Naive thymus-derived CD4-positive, alpha-beta T cell (primary cell): ENCODE measurements at regions of chr20 and their contacts with region 1.

Region 1: DNA sequence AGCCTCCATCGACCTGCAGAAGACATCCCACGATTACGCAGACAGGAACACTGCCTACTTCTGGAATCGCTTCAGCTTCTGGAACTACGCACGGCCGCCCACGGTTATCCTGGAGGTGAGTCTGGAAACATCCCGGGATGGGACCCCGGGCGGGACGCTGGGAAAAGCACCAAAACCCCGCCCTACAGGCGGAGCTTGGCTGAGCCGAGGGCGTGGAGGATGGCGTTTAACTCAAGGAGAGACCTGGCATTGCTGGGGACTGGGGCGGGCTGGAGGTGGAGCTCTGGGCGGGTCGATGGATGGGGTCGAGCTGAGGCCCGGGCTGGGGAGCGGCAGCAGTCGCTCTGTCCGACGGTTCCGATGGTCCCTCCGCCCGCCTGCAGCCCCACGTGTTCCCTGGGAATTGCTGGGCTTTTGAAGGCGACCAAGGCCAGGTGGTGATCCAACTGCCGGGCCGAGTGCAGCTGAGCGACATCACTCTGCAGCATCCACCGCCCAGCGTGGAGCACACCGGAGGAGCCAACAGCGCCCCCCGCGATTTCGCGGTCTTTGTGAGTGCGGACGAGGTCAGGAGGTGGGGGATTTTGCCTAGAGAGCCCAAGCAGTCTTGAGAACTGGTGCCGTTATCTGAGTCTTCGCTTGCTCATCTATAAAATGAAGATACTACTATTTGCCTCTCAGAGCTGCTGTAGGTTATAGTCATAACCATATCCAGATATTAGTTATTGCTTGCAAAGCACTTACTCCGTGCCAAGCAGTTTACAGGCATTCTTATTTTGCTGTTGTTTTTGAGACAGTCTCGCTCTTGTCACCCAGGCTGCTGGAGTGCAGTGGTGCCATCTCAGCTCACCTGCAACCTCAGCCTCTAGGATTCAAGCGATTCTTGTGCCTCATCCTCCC is 3.8 kb downstream of the SPAG4 start:
- DNase-seq: peak; percentile 54 to 84 (median 68)
- ATAC-seq: peak; percentile 31
- H3K4me3 ChIP-seq: peak overlapping the region; percentile 70
- H3K4me3 Mint-ChIP-seq: peak overlapping the region; percentile 87 to 98 (median 91)
- H3K27ac ChIP-seq: peak overlapping the region; percentile 27
- H3K27ac Mint-ChIP-seq: peak overlapping the region; percentile 62 to 90 (median 85)
- H3K4me1 ChIP-seq: peaks cover 16 to 28% of the 10 kb centered on the region in 2 donors
- H3K4me1 Mint-ChIP-seq: peaks cover 13 to 45% (median 34%) of the 10 kb centered on the region in 7 donors
- H3K27me3 ChIP-seq: no peaks in the 10 kb centered on the region
- H3K27me3 Mint-ChIP-seq: peaks cover 0 to 3% (median 0%) of the 10 kb centered on the region in 5 donors

Region 2: GRCh38 chr20:34676642-34677373 is 942.6 kb before region 1 on chr20 and contains the start of gene PIGU:
- CTCF ChIA-PET with region 1: no interaction called
- POLR2A ChIA-PET with region 1: no interaction called
- intact Hi-C with region 1: loop called in 1 of 2 experiments (anchors 2 kb)
- DNase-seq: peak; percentile 88 to 97 (median 96)
- ATAC-seq: peak; percentile 99
- H3K4me3 ChIP-seq: peak within 1 kb of the TSS; percentile 63
- H3K4me3 Mint-ChIP-seq: peak within 1 kb of the TSS; percentile 95 to 99 (median 96)
- H3K27ac ChIP-seq: peak within 1 kb of the TSS; percentile 95
- H3K27ac Mint-ChIP-seq: peak within 1 kb of the TSS; percentile 85 to 98 (median 97)
- H3K4me1 ChIP-seq: peaks cover 4 to 5% of the 10 kb centered on the region in 2 donors
- H3K4me1 Mint-ChIP-seq: peaks cover 14 to 37% (median 24%) of the 10 kb centered on the region in 7 donors
- H3K27me3 ChIP-seq: no peaks in the 10 kb centered on the region
- H3K27me3 Mint-ChIP-seq: no peaks in the 10 kb centered on the region
- total RNA-seq, gene PIGU: 8.6 to 21.3 (median 16.1) TPM

Region 3: GRCh38 chr20:35410613-35411012 is 208.8 kb before region 1 on chr20:
- CTCF ChIA-PET with region 1: no interaction called
- POLR2A ChIA-PET with region 1: no interaction called
- intact Hi-C with region 1: loop called (anchors 1 to 2 kb)
- DNase-seq: no peak
- ATAC-seq: no peak
- H3K4me3 ChIP-seq: peak overlapping the region; percentile 79
- H3K4me3 Mint-ChIP-seq: peak overlapping the region; percentile 92 to 100 (median 98)
- H3K27ac ChIP-seq: no peak overlapping the region
- H3K27ac Mint-ChIP-seq: peak overlapping the region in 8 of 9 donors; percentile 48 to 100 (median 97)
- H3K4me1 ChIP-seq: peaks cover 8 to 9% of the 10 kb centered on the region in 2 donors
- H3K4me1 Mint-ChIP-seq: peaks cover 17 to 24% (median 22%) of the 10 kb centered on the region in 7 donors
- H3K27me3 ChIP-seq: no peaks in the 10 kb centered on the region
- H3K27me3 Mint-ChIP-seq: peaks cover 0 to 2% (median 0%) of the 10 kb centered on the region in 5 donors

Region 4: DNA sequence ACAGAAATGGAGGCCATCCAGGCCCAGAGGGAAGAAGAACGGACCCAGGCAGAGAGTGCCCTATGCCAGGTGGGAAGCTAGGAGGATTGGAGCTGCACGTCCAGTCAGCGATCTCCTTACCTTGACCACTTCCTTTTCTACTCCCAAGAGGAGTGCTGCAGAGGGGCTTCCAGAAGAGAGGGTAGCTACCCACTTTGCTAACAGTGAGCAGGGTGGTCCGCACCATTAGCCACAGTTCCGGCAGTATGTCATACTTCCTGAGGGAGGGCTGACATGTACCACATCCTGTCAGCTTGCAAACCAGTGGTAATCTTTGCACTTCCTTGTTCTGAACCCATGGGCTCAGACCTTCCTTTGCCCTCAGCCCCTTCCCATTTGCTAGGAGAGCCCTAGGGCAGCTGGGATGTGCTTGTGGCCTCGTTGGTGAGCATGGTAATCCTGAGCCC is 128.7 kb before region 1 on chr20:
- CTCF ChIA-PET with region 1: no interaction called
- POLR2A ChIA-PET with region 1: interaction called, 3 read pairs
- intact Hi-C with region 1: loop called (anchors 1 kb)
- DNase-seq: peak; percentile 27 to 77 (median 67)
- ATAC-seq: peak; percentile 99
- H3K4me3 ChIP-seq: peak overlapping the region; percentile 92
- H3K4me3 Mint-ChIP-seq: peak overlapping the region; percentile 99 to 100 (median 99)
- H3K27ac ChIP-seq: peak overlapping the region; percentile 84
- H3K27ac Mint-ChIP-seq: peak overlapping the region; percentile 98 to 100 (median 99)
- H3K4me1 ChIP-seq: peaks cover 23 to 27% of the 10 kb centered on the region in 2 donors
- H3K4me1 Mint-ChIP-seq: peaks cover 47 to 92% (median 72%) of the 10 kb centered on the region in 7 donors
- H3K27me3 ChIP-seq: no peaks in the 10 kb centered on the region
- H3K27me3 Mint-ChIP-seq: no peaks in the 10 kb centered on the region

Region 5: GRCh38 chr20:35664544-35665221 is 45.2 kb after region 1 on chr20 and contains the starts of genes CPNE1 and RBM12:
- CTCF ChIA-PET with region 1: interaction called, 5 read pairs
- POLR2A ChIA-PET with region 1: interaction called, 72 read pairs
- intact Hi-C with region 1: loop called (anchors 1 kb)
- DNase-seq: peak; percentile 89 to 96 (median 96)
- ATAC-seq: peak; percentile 89
- H3K4me3 ChIP-seq: peak within 1 kb of the TSS; percentile 88
- H3K4me3 Mint-ChIP-seq: peak within 1 kb of the TSS; percentile 89 to 98 (median 96)
- H3K27ac ChIP-seq: peak within 1 kb of the TSS; percentile 100
- H3K27ac Mint-ChIP-seq: peak within 1 kb of the TSS; percentile 98 to 100 (median 99)
- H3K4me1 ChIP-seq: peaks cover 35 to 38% of the 10 kb centered on the region in 2 donors
- H3K4me1 Mint-ChIP-seq: peaks cover 32 to 49% (median 47%) of the 10 kb centered on the region in 7 donors
- H3K27me3 ChIP-seq: no peaks in the 10 kb centered on the region
- H3K27me3 Mint-ChIP-seq: no peaks in the 10 kb centered on the region
- total RNA-seq, gene CPNE1: 250 to 378 (median 305) TPM
- total RNA-seq, gene RBM12: 98.2 to 122 (median 114) TPM

Region 6: DNA sequence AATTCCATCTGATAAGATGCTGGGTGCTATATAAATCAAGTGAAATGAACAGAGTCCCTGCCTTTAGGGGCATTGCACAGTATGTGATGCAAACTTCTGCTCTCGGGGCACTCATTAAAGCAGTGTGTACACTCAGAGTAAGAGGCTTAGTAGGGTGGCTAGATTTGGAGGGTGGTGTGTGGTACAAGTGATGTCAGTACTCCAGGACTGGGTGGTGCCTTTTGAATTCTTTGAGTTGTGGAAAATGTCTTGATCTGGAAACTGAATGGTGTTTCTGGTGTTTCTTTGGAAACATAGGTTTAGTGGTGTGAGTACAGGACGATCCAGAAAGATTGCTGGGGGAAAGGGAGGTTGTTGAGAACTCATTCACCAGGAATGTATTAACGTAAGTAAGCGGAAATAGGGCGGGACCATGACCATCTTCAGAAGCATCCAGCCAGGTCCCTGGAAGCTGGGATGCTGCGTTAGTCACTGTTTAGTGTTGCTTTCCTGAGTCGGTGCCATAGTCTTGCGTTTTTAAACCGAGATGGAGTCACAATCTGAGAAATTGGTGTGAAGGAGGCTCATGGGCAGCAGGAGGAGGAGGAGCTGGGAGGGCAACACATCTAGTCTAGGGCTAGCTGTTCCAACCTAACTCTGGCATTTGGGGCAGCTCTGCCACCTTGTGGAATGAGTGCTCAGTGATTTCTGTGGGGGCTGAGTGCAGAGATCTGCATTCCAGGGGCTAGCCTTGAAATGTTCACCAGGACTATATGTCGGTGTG is 264.5 kb after region 1 on chr20:
- CTCF ChIA-PET with region 1: interaction called, 5 read pairs
- POLR2A ChIA-PET with region 1: no interaction called
- intact Hi-C with region 1: loop called in 1 of 2 experiments (anchors 1 kb)
- DNase-seq: peak; percentile 26 to 69 (median 60)
- ATAC-seq: peak; percentile 93
- H3K4me3 ChIP-seq: no peak overlapping the region
- H3K4me3 Mint-ChIP-seq: peak overlapping the region in 1 of 10 donors; percentile 3
- H3K27ac ChIP-seq: no peak overlapping the region
- H3K27ac Mint-ChIP-seq: peak overlapping the region in 8 of 9 donors; percentile 10 to 74 (median 51)
- H3K4me1 ChIP-seq: no peaks in the 10 kb centered on the region
- H3K4me1 Mint-ChIP-seq: peaks cover 10 to 22% (median 16%) of the 10 kb centered on the region in 7 donors
- H3K27me3 ChIP-seq: no peaks in the 10 kb centered on the region
- H3K27me3 Mint-ChIP-seq: no peaks in the 10 kb centered on the region